T-cell (primary cell): ENCODE measurements at regions of chr16 and their contacts with region 1.

Region 1: GRCh38 chr16:21158208-21159110 is at the start of gene LDAF1:
- DNase-seq: peak; percentile 51 to 84 (median 72)
- ATAC-seq: peak; percentile 99
- H3K4me3 ChIP-seq: peak within 1 kb of the TSS; percentile 65 to 84
- H3K4me3 Mint-ChIP-seq: peak within 1 kb of the TSS; percentile 88 to 93 (median 92)
- H3K27ac ChIP-seq: peak within 1 kb of the TSS; percentile 16
- H3K27ac Mint-ChIP-seq: peak within 1 kb of the TSS; percentile 63 to 86
- H3K4me1 ChIP-seq: peaks cover 5 to 20% of the 10 kb centered on the region in 2 experiments
- H3K4me1 Mint-ChIP-seq: peaks cover 29 to 41% (median 29%) of the 10 kb centered on the region in 3 donors
- H3K27me3 ChIP-seq: no peaks in the 10 kb centered on the region
- H3K27me3 Mint-ChIP-seq: no peaks in the 10 kb centered on the region
- total RNA-seq, gene LDAF1: 11.0 to 15.2 (median 12.7) TPM

Region 2: GRCh38 chr16:21179126-21179982 is 20.9 kb after region 1 on chr16:
- CTCF ChIA-PET with region 1: interaction called in 1 of 2 experiments, 10 read pairs
- POLR2A ChIA-PET with region 1: no interaction called
- DNase-seq: no peak
- ATAC-seq: no peak
- H3K4me3 ChIP-seq: no peak overlapping the region
- H3K4me3 Mint-ChIP-seq: no peak overlapping the region
- H3K27ac ChIP-seq: no peak overlapping the region
- H3K27ac Mint-ChIP-seq: no peak overlapping the region
- H3K4me1 ChIP-seq: no peaks in the 10 kb centered on the region
- H3K4me1 Mint-ChIP-seq: no peaks in the 10 kb centered on the region
- H3K27me3 ChIP-seq: no peaks in the 10 kb centered on the region
- H3K27me3 Mint-ChIP-seq: no peaks in the 10 kb centered on the region